Right cardiac atrium (tissue), 5 donors: ENCODE measurements at regions of chr20 and their contacts with region 1.

Region 1: DNA sequence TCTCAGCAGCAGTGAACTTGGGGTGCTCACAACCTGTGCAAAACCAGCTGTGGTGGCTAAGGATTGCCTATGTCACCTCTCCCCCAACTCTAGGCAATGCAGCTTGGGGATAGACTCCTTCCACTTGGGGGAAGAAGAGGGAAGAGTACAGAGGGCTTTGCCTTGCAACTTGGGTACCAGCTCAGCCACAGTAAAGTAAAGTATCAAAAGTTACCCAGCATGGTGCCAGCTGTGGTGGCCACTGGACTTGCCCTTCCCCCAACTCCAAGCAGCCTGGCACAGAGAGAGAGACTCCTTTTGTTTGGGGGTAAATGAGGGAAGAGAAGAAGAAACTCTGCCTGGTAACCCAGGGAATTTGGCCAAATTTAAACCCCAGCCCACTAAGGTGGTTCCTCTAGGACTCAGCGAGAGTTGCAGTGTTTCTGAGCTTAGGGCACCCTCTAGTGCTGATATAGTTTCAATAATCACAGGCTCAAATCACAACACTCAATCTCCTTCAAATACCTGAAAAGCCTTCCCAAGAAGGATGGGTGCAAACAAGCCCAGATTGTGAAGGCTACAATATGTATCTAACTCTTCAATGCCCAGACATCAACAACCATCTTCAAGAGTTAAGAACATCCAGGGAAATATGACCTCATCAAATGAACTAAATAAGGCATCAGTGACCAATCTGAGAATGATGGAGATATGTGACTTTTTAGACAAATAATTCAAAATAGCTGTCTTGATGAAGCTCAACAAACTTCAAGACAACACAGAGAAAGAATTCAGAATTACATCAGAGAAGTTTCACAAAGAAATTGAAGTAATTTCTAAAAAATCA is 7.6 kb upstream of the DEFB129 start:
- DNase-seq: no peak
- ATAC-seq: peak; percentile 52 to 71
- H3K4me3 ChIP-seq: no peak overlapping the region
- H3K27ac ChIP-seq: no peak overlapping the region
- H3K4me1 ChIP-seq: no peaks in the 10 kb centered on the region
- H3K27me3 ChIP-seq: no peaks in the 10 kb centered on the region

Region 2: GRCh38 chr20:79565-79964 is 139.9 kb before region 1 on chr20:
- intact Hi-C with region 1: no loop called
- DNase-seq: no peak
- ATAC-seq: no peak
- H3K4me3 ChIP-seq: no peak overlapping the region
- H3K27ac ChIP-seq: no peak overlapping the region
- H3K4me1 ChIP-seq: no peaks in the 10 kb centered on the region
- H3K27me3 ChIP-seq: no peaks in the 10 kb centered on the region

Region 3: GRCh38 chr20:168876-169275 is 50.6 kb before region 1 on chr20:
- intact Hi-C with region 1: no loop called
- DNase-seq: no peak
- ATAC-seq: no peak
- H3K4me3 ChIP-seq: no peak overlapping the region
- H3K27ac ChIP-seq: no peak overlapping the region
- H3K4me1 ChIP-seq: no peaks in the 10 kb centered on the region
- H3K27me3 ChIP-seq: no peaks in the 10 kb centered on the region

Region 4: DNA sequence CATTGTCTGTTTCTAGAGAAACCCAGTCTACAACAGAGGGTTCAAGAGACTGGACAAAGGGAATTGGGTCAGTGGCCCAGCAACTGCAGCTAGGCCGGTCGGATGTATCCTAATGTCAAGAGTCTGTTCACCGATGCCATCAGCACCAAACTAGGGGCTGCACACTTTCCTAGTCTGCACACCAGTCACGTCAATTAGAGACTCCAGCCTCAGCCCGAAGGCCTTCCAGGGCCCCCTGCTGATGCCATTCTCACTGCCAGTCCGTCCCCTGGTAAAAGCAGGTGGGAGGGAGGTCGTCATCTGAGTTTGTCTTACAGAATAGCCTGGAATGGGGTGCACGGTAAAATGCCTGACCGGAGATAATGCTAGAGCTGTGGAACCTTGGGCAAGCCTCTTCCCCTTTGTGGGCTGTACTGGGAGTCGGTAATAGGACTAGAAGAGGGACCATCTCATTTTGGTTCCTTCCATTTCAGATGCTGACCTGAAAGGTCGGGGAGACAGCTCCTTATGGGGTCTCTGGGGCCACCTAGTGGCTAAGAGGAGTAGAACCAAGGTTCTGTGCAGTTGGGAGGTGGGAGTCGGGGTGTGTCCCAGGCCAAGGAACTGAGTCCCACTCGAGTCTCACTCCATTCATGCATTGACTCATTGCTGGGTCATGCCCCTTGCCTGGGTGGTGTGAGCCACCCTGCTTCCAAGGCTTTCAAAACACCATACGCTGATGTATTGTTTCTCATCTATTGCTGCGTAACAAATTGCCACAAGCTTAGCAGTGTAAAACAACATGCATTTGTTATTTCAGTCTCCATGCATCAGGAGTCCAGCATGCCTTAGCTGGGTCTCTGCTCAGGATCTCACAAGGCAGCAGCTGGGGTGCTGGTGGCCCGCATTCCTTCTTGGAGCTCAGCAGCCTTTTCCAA is 111.0 kb after region 1 on chr20:
- intact Hi-C with region 1: loop called in 1 of 4 experiments (anchors 10 kb)
- DNase-seq: peak in 1 of 3 donors; percentile 69
- ATAC-seq: peak; percentile 2 to 15
- H3K4me3 ChIP-seq: no peak overlapping the region
- H3K27ac ChIP-seq: no peak overlapping the region
- H3K4me1 ChIP-seq: no peaks in the 10 kb centered on the region
- H3K27me3 ChIP-seq: no peaks in the 10 kb centered on the region

Region 5: GRCh38 chr20:719816-720215 is 500.3 kb after region 1 on chr20:
- intact Hi-C with region 1: no loop called
- DNase-seq: no peak
- ATAC-seq: no peak
- H3K4me3 ChIP-seq: no peak overlapping the region
- H3K27ac ChIP-seq: no peak overlapping the region
- H3K4me1 ChIP-seq: no peaks in the 10 kb centered on the region
- H3K27me3 ChIP-seq: no peaks in the 10 kb centered on the region